GM10248 (cell line): ENCODE measurements at regions of chr1 and their contacts with region 1.

Region 1: GRCh38 chr1:151340870-151341754 is 5.9 kb downstream of the RFX5 start:
- DNase-seq: peak; percentile 62
- CTCF ChIP-seq: peak; percentile 64

Region 2: DNA sequence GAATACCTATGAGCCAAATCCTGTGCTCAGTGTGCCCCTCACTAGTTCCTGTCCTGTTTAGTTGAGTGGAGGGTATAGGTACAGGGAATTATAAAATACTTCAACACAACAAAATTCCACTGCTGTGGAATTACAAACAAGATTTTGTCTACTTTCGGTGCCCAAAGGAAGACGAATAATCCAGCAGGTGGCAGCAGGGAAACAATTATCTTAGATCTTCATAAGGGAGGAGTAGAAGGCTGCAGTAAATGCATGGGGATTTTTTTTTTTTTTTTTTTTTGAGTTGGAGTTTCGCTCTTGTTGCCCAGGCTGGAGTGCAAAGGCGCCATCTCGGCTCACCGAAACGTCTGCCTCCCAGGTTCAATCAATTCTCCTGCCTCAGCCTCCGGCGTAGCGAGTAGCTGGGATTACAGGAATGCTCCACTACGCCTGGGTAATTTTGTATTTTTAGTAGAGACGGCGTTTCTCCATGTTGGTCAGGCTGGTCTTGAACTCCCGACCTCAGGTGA is 144.8 kb before region 1 on chr1:
- CTCF ChIA-PET with region 1: interaction called, 11 read pairs
- POLR2A ChIA-PET with region 1: no interaction called
- DNase-seq: peak; percentile 56
- CTCF ChIP-seq: peak; percentile 56

Region 3: DNA sequence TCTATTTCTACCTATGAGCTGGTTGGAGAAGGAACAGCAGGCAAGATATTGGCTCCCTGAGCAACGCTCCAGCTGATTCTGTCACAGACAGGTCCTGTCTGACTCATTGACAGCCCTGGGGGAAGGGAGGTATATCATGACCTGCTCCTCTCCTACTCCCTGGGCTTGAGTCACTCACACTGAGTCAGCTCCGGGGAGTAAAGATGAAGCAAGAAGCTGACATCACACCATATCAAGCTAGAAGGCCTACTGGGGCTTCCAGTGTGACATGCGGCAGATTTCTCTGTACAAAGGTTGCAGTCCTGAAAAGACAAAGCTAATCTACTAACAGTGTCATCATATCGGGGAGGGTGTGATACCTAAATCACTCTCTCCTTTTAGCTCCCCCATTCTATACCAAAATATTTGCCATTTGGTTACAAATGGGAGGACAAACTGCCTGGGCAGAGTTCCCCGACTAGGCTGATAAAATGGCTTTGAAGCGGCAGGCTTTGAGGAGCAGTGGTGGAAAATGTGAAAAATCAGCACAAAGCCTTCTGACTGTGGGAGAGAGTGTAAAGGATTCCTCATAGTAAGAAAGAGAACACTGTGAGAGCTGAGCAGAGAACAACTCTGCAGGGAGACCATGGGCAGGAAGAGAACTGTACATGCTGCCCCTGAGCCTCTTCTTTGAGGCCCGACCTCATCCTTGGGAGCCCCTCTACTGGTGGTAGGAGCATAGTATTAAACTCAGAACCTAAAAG is 29.4 kb before region 1 on chr1:
- CTCF ChIA-PET with region 1: interaction called, 67 read pairs
- POLR2A ChIA-PET with region 1: no interaction called
- DNase-seq: no peak
- CTCF ChIP-seq: no peak

Region 4: DNA sequence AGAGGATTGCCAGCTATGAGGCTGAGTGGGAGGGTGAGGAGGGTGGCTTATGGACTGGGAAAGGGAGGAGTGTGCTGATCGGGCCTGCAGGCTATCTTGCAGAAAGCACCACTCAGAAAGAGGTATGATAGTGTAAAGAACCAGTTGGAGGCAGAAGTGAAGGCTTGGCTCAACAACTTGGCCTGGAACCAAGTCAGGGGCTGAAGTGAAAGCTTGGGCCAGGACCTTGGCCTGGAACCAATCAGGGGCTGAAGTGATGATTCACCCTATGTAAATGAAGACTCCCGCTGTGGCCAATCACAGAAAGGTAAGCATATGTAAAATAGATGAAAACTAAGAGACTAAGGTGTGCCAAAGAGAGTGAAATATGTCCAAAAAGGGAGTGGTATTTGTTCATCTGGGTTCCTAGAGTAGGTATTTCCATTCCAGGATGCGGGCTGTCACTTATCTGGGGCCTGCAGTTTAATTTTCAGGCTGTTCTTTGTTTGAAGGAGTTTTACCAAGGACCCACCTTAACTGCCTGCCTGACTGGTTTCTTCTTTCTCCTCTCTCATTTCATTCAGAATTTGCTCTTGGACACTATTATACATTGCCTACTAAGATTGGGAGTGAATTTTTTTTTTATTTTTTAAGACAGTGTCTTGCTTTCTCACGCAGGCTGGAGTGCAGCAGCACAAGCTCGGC is 11.0 kb after region 1 on chr1:
- CTCF ChIA-PET with region 1: interaction called, 67 read pairs
- POLR2A ChIA-PET with region 1: interaction called, 4 read pairs
- DNase-seq: no peak
- CTCF ChIP-seq: no peak